ENCODE measurements at regions of chr10 and their contacts with region 1.

Region 1: DNA sequence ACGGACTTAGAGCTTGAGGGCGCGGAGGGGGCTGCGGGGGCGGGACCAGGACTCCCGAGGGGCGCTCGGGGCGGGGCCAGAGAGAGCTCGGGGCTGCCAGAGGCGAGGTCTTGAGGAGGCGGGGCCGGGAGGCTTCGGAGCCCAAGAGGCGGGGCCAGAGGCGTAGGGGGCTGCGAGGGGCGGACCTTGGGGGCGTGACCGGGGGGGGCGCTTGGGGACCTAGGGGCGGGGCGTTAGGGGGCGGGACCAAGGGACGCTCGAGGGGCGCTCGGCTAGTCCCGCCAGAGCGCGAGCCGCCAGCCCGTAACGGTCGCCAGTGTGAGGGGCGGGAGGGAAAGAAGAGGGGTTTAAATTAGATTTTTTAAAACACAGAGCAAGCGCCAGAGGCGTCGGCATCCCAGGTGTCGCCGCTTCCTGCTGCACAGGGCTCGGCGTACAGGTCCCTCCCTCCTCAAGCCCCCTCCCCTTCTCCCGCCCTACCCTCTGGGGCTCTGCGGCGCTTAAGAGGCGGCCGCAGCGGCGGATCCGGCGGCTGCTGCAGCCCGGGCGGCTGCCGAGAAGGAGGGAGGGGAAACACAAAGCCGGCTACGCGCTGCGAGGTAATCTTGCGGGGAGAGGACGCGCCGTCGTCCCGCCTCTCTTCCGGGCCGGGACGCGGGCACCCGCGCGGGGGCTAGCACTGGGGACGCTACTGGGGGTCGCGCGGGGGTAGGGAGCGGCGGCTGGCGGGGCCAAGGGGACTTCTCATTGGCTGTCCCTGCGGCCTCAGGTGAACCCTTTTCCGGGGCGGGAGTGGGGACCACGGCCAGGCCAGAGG is at the start of gene ADD3:
- DNase-seq: peak; percentile 92
- ATAC-seq: peak; percentile 85
- H3K4me3 ChIP-seq: peak within 1 kb of the TSS; percentile 77 to 94 (median 85)
- H3K27ac ChIP-seq: peak within 1 kb of the TSS; percentile 98
- H3K4me1 ChIP-seq: peaks cover 63% of the 10 kb centered on the region
- H3K27me3 ChIP-seq: no peaks in the 10 kb centered on the region
- CTCF ChIP-seq: no peak
- EP300 ChIP-seq: no peak; a peak in 1 of 4 replicates
- POLR2A ChIP-seq: peak; percentile 74 to 80
- RAD21 ChIP-seq: no peak
- total RNA-seq, gene ADD3: 57.5 and 70.2 TPM in 2 replicates

Region 2: GRCh38 chr10:109647627-109648026 is 360.3 kb before region 1 on chr10:
- CTCF ChIA-PET with region 1: no interaction called
- POLR2A ChIA-PET with region 1: no interaction called
- in situ Hi-C with region 1: no loop called
- intact Hi-C with region 1: no loop called
- DNase-seq: no peak
- ATAC-seq: no peak
- H3K4me3 ChIP-seq: no peak overlapping the region
- H3K27ac ChIP-seq: no peak overlapping the region
- H3K4me1 ChIP-seq: no peaks in the 10 kb centered on the region
- H3K27me3 ChIP-seq: no peaks in the 10 kb centered on the region; a peak in 1 of 5 replicates
- CTCF ChIP-seq: no peak
- EP300 ChIP-seq: no peak
- POLR2A ChIP-seq: no peak
- RAD21 ChIP-seq: no peak

Region 3: DNA sequence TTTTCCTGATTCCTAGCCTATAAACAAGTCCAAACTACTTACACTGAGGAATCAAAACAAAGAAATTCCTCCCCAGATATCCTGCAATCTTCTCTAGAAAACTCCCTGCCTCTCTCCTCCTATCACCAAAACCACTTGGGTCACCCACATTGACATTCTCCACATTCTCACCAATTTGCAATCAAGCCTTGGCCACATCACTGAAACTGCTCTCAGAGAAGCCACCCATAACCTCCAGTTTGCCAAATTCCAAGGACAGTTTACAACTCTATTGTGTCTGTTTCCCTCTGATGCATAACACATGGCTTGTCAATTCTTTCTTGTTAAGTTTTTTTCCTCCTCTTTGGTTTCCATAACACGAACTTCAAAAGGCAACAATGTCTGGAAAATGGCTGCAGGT is 318.1 kb before region 1 on chr10:
- CTCF ChIA-PET with region 1: no interaction called
- POLR2A ChIA-PET with region 1: no interaction called
- in situ Hi-C with region 1: no loop called
- intact Hi-C with region 1: no loop called
- DNase-seq: no peak
- ATAC-seq: no peak
- H3K4me3 ChIP-seq: no peak overlapping the region
- H3K27ac ChIP-seq: no peak overlapping the region
- H3K4me1 ChIP-seq: no peaks in the 10 kb centered on the region
- H3K27me3 ChIP-seq: no peaks in the 10 kb centered on the region; a peak in 1 of 5 replicates
- CTCF ChIP-seq: no peak
- EP300 ChIP-seq: no peak
- POLR2A ChIP-seq: no peak
- RAD21 ChIP-seq: no peak

Region 4: DNA sequence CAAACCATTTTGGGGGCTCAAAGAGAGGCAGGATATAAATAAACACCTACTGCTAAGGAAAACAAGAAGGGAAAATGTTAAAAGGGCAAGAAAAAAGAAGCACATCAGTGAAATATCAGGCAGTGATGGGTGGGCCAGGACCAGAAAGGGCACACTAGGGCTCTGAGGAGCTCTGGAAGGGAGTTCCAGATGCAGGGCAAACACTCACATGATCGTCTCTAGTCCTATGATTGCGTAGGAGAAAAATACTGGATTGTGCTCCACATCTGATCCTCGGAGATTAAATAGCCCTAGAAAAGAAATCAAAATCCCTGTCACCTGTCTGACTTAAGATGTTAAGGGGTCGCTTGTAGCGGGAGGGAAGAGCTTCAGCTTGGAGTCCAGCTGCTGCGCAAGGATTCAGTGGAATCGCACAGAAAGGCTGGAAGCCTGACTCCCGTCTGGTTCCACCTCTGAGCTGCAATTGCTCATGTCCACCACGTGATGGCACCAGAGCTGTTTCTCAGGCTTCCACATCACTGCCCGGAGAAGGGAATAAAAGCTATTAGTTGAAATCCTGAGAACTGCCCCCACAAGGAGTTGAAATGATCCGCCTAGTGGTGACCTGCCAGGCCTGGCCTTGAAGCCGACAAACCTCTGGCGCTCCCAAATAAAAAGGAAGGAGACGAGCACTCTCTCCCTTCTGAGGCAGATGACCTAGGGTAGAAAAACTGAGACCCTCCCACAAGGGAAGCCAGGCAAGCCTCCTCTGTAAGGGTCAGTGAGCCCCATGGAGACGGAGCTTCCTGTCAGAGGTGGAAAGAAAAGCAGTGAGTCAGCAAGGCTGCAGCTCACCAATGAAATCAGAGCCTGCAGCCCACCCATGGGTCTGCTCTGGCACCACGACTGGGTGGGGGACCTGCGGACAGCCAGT is 123.8 kb before region 1 on chr10:
- CTCF ChIA-PET with region 1: no interaction called
- POLR2A ChIA-PET with region 1: interaction called, 9 read pairs
- in situ Hi-C with region 1: loop called (anchors 25 kb)
- intact Hi-C with region 1: loop called (anchors 2 kb)
- DNase-seq: peak; percentile 81
- ATAC-seq: peak; percentile 93
- H3K4me3 ChIP-seq: no peak overlapping the region
- H3K27ac ChIP-seq: no peak overlapping the region
- H3K4me1 ChIP-seq: peaks cover 7% of the 10 kb centered on the region; the same call in 1 of the 2 replicates
- H3K27me3 ChIP-seq: no peaks in the 10 kb centered on the region
- CTCF ChIP-seq: peak; percentile 93
- EP300 ChIP-seq: no peak
- POLR2A ChIP-seq: no peak
- RAD21 ChIP-seq: peak; percentile 95

Region 5: GRCh38 chr10:109966961-109967738 is 40.8 kb before region 1 on chr10:
- CTCF ChIA-PET with region 1: no interaction called
- POLR2A ChIA-PET with region 1: interaction called, 16 read pairs
- in situ Hi-C with region 1: loop called (anchors 5 kb)
- intact Hi-C with region 1: loop called (anchors 2 kb)
- DNase-seq: peak; percentile 82
- ATAC-seq: peak; percentile 85
- H3K4me3 ChIP-seq: peak overlapping the region; percentile 41 to 56 (median 45)
- H3K27ac ChIP-seq: peak overlapping the region; percentile 62
- H3K4me1 ChIP-seq: peaks cover 71% of the 10 kb centered on the region
- H3K27me3 ChIP-seq: no peaks in the 10 kb centered on the region
- CTCF ChIP-seq: no peak
- EP300 ChIP-seq: peak in 1 of 2 experiments; percentile 64; a peak in 1 of 4 replicates
- POLR2A ChIP-seq: no peak
- RAD21 ChIP-seq: no peak

Region 6: GRCh38 chr10:109978481-109978880 is 29.4 kb before region 1 on chr10:
- CTCF ChIA-PET with region 1: no interaction called
- POLR2A ChIA-PET with region 1: interaction called, 70 read pairs
- in situ Hi-C with region 1: no loop called
- intact Hi-C with region 1: loop called (anchors 2 kb)
- DNase-seq: peak; percentile 29
- ATAC-seq: no peak
- H3K4me3 ChIP-seq: no peak overlapping the region
- H3K27ac ChIP-seq: peak overlapping the region; percentile 86
- H3K4me1 ChIP-seq: peaks cover 54% of the 10 kb centered on the region
- H3K27me3 ChIP-seq: no peaks in the 10 kb centered on the region
- CTCF ChIP-seq: peak; percentile 51
- EP300 ChIP-seq: no peak
- POLR2A ChIP-seq: no peak
- RAD21 ChIP-seq: peak; percentile 53

Region 7: DNA sequence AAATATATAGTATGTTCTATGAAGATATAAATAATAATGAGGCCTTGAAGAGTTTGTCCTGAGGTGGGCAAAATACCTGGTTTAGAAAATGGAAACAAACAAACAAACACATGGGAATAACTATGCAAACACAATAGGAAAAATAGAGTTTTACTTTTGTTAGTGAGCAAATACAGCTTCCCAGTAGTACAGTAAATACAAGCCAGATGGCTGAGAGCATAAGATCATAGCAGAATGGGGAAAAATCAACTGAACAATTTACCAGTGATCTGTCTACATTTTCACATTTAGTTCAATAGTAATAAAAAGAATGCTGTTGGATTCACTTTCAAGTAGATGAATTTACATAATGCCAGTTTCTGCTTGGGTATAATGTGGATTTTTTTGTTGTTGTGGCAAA is 45.0 kb after region 1 on chr10:
- CTCF ChIA-PET with region 1: no interaction called
- POLR2A ChIA-PET with region 1: no interaction called
- in situ Hi-C with region 1: no loop called
- intact Hi-C with region 1: no loop called
- DNase-seq: no peak
- ATAC-seq: no peak
- H3K4me3 ChIP-seq: no peak overlapping the region
- H3K27ac ChIP-seq: no peak overlapping the region
- H3K4me1 ChIP-seq: no peaks in the 10 kb centered on the region
- H3K27me3 ChIP-seq: no peaks in the 10 kb centered on the region
- CTCF ChIP-seq: no peak
- EP300 ChIP-seq: no peak
- POLR2A ChIP-seq: no peak
- RAD21 ChIP-seq: no peak

Region 8: GRCh38 chr10:110076559-110077318 is 68.8 kb after region 1 on chr10:
- CTCF ChIA-PET with region 1: no interaction called
- POLR2A ChIA-PET with region 1: interaction called, 5 read pairs
- in situ Hi-C with region 1: no loop called
- intact Hi-C with region 1: loop called (anchors 5 kb)
- DNase-seq: peak; percentile 93
- ATAC-seq: peak; percentile 90
- H3K4me3 ChIP-seq: peak overlapping the region; percentile 7 to 52 (median 36); a peak in 3 of 6 replicates
- H3K27ac ChIP-seq: peak overlapping the region; percentile 55
- H3K4me1 ChIP-seq: peaks cover 67% of the 10 kb centered on the region
- H3K27me3 ChIP-seq: no peaks in the 10 kb centered on the region
- CTCF ChIP-seq: no peak
- EP300 ChIP-seq: peak; percentile 63 to 79; a peak in 2 of 4 replicates
- POLR2A ChIP-seq: no peak
- RAD21 ChIP-seq: no peak

Region 9: GRCh38 chr10:110395725-110396651 is 388.1 kb after region 1 on chr10:
- CTCF ChIA-PET with region 1: no interaction called
- POLR2A ChIA-PET with region 1: no interaction called
- in situ Hi-C with region 1: no loop called
- intact Hi-C with region 1: no loop called
- DNase-seq: peak; percentile 64
- ATAC-seq: peak; percentile 49
- H3K4me3 ChIP-seq: no peak overlapping the region
- H3K27ac ChIP-seq: no peak overlapping the region
- H3K4me1 ChIP-seq: peaks cover 44% of the 10 kb centered on the region
- H3K27me3 ChIP-seq: peaks cover 0 to 4% of the 10 kb centered on the region in 2 experiments; a peak in 1 of 5 replicates
- CTCF ChIP-seq: no peak
- EP300 ChIP-seq: peak in 1 of 2 experiments; percentile 48; a peak in 1 of 4 replicates
- POLR2A ChIP-seq: no peak
- RAD21 ChIP-seq: no peak